ENCODE measurements at regions of chr12 and their contacts with region 1.

Region 1: DNA sequence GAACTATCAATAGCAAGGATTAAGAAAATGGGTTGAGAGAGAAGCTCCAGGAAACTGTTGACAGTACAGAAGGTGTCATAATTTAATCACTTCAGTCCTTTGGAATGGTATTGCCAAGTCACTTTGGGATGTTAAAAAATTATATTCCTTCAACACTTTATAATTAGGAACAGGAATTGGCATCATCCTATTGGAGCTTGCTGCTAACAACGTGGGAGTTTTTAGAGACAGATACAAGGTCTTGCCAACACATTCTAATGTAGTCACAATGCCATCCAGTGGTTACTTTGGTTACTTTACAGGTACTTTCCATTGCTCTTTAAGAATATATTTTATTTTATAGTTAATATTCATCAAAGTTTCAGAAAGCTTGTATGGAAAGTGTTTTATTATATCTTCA is 310.1 kb downstream of the SYT1 start:
- DNase-seq: no peak
- H3K4me3 ChIP-seq: no peak overlapping the region
- H3K27ac ChIP-seq: no peak overlapping the region
- H3K27me3 ChIP-seq: no peaks in the 10 kb centered on the region
- CTCF ChIP-seq: peak; percentile 46

Region 2: DNA sequence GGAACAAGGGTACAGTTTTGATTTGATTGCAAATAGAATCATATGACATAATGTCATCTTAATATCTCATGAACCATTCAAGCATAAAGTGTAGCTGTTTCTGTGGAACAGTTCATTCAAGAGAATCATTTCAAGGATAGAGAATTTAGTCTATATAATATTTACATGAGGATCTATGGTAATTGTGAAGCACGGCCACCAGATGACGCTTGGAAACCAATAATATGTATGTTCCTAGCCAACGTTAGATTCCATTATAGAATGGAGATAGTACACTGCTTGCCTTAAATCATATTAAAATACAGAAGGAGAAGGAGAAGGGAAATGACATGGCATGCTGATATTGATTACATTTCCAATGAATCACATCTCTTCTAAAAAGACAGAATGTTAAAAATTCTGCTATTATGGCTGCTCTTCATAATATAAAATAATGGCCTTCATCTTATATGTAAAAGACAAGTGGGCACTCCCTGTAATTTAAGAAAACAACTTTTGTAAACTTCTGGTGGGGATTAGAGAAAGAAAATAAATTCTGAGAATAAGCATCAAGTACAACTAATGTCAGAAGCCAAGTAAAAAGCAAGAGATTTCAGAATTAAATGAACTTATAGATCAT is 993.0 kb before region 1 on chr12:
- CTCF ChIA-PET with region 1: interaction called, 22 read pairs
- POLR2A ChIA-PET with region 1: no interaction called
- DNase-seq: no peak
- H3K4me3 ChIP-seq: no peak overlapping the region
- H3K27ac ChIP-seq: no peak overlapping the region
- H3K27me3 ChIP-seq: no peaks in the 10 kb centered on the region
- CTCF ChIP-seq: peak; percentile 71

Region 3: GRCh38 chr12:78392918-78393317 is 781.7 kb before region 1 on chr12:
- CTCF ChIA-PET with region 1: interaction called, 22 read pairs
- POLR2A ChIA-PET with region 1: no interaction called
- DNase-seq: no peak
- H3K4me3 ChIP-seq: no peak overlapping the region
- H3K27ac ChIP-seq: no peak overlapping the region
- H3K27me3 ChIP-seq: no peaks in the 10 kb centered on the region
- CTCF ChIP-seq: peak; percentile 44

Region 4: GRCh38 chr12:78470354-78471195 is 704.1 kb before region 1 on chr12:
- CTCF ChIA-PET with region 1: interaction called, 31 read pairs
- POLR2A ChIA-PET with region 1: no interaction called
- DNase-seq: no peak
- H3K4me3 ChIP-seq: no peak overlapping the region
- H3K27ac ChIP-seq: no peak overlapping the region
- H3K27me3 ChIP-seq: no peaks in the 10 kb centered on the region
- CTCF ChIP-seq: peak; percentile 79

Region 5: DNA sequence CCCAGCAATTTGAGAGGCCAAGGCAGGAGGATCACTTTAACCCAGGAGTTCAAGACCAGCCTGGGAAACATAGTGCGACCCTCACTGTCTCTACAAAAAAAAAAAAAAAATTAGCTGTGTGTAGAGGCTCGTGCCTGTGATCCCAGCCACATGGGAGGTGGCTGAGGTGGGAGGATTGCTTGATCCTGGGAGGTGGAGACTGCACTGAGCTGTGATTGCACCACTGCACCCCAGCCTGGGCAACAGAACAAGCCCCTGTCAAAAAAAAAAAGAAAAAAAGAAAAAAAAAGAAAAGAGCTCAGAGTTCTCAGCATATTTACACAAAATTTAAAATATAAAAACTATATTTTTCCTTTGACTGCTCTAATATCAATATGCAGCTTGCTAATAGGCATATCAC is 49.3 kb before region 1 on chr12:
- CTCF ChIA-PET with region 1: no interaction called
- POLR2A ChIA-PET with region 1: no interaction called
- DNase-seq: no peak
- H3K4me3 ChIP-seq: no peak overlapping the region
- H3K27ac ChIP-seq: no peak overlapping the region
- H3K27me3 ChIP-seq: no peaks in the 10 kb centered on the region
- CTCF ChIP-seq: no peak

Region 6: DNA sequence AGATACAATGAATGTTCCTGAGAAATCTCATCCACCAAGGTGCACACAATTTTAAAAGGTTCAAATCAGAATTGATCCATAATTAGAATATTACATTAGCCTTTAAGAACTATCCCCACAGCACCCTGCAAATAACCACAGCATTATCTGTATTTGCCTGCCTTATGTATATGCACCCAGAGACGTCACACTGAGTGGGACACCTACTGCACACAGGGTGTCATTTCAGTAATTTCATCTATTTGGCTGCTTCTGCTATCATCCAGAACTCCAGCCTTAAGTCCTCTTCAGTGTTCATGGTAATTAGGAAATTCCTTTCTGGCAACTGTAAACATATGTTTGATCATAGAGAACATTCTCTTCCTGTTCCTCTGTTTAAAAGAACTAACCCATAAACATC is 11.7 kb before region 1 on chr12:
- CTCF ChIA-PET with region 1: interaction called, 11 read pairs
- POLR2A ChIA-PET with region 1: no interaction called
- DNase-seq: no peak
- H3K4me3 ChIP-seq: no peak overlapping the region
- H3K27ac ChIP-seq: no peak overlapping the region
- H3K27me3 ChIP-seq: no peaks in the 10 kb centered on the region
- CTCF ChIP-seq: no peak

Region 7: GRCh38 chr12:80087486-80088213 is 913.0 kb after region 1 on chr12:
- CTCF ChIA-PET with region 1: no interaction called
- POLR2A ChIA-PET with region 1: no interaction called
- DNase-seq: no peak
- H3K4me3 ChIP-seq: no peak overlapping the region
- H3K27ac ChIP-seq: no peak overlapping the region
- H3K27me3 ChIP-seq: no peaks in the 10 kb centered on the region
- CTCF ChIP-seq: no peak

Measured in AG04450 (cell line).